Left cardiac atrium (tissue), 4 donors: ENCODE measurements at regions of chr12 and their contacts with region 1.

Region 1: GRCh38 chr12:66169221-66170170 is at the start of gene TMBIM4:
- DNase-seq: peak; percentile 92
- ATAC-seq: peak; percentile 97
- total RNA-seq, gene TMBIM4: 92.2 to 101 TPM

Region 2: GRCh38 chr12:66235626-66236281 is 66.3 kb after region 1 on chr12:
- intact Hi-C with region 1: loop called in 1 of 2 experiments (anchors 10 kb)
- DNase-seq: no peak
- ATAC-seq: no peak

Region 3: GRCh38 chr12:66257990-66258389 is 88.5 kb after region 1 on chr12:
- intact Hi-C with region 1: no loop called
- DNase-seq: no peak
- ATAC-seq: no peak

Region 4: GRCh38 chr12:66301944-66302826 is 132.7 kb after region 1 on chr12 and contains the start of gene HELB:
- intact Hi-C with region 1: loop called in 1 of 2 experiments (anchors 10 kb)
- DNase-seq: peak; percentile 99
- ATAC-seq: peak; percentile 99 to 100
- total RNA-seq, gene HELB: 1.4 to 2.2 TPM

Region 5: DNA sequence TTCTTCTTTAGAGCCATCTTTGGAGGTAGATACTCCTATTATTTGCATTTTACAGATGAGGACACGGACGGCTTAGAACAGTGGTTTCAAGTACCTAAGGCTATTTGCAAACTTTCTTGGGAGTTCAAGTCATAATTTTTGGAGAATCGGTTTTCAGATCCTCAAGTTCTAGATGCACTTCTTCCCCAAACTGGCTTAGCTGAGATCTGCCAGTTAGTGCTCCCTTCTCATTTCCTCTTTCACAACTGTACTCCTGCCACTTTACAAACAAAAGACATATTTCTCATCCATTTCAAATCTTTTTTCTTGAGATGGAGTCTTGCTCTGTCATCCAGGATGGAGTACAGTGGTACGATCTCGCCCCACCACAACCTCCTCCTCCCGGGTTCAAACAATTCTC is 210.1 kb after region 1 on chr12:
- intact Hi-C with region 1: no loop called
- DNase-seq: no peak
- ATAC-seq: no peak